H1 (cell line): ENCODE measurements at regions of chr17 and their contacts with region 1.

Region 1: DNA sequence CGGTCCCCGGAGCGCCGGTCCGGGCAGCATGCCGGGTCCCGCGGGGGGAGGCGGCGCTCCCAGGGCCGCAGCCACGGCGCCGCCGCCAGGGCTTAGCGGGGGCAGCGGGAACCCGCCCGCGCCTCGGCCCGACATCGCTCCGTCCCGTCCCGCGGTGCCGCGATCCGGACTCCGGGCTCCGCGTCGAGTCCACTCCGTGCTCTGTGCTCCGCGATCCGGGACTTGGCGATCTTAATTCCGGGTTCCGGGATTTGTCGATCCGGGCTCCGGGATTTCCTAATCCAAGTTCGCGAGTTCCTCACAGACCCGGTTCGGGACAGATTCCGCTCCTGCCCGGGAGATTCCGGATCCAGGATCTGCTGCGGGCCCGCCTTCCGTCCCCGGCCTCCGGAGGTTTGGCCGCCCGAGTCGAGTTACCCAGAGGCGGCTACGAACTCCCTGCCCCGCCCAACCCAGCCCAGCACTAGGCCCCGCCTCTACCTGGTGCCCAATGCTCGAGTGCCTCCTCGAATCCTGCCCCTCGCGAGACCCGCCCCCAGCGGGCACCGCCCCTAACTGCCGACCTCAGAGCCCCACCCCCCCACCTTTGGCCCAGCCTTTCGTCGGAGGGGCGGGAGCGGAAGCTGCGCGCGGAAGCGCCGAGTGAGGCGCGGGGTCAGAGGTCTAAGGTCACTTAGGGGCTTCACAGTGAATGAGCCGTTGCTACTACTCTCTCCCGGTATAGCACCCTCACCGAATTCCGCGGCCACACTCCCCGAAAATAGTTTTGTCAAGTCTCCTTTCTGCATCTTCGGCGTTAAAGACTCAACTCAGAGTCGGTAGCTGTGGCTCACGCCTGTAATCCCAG is at the start of gene SMARCD2:
- DNase-seq: peak; percentile 97
- H3K4me3 ChIP-seq: peak within 1 kb of the TSS; percentile 76 to 97 (median 83)
- H3K27ac ChIP-seq: peak within 1 kb of the TSS; percentile 65; the same call in 1 of the 2 replicates
- H3K4me1 ChIP-seq: peaks cover 3 to 26% (median 24%) of the 10 kb centered on the region in 4 experiments
- H3K27me3 ChIP-seq: peaks cover 0 to 16% (median 10%) of the 10 kb centered on the region in 4 experiments; a peak in 6 of 7 replicates
- CTCF ChIP-seq: no peak
- EP300 ChIP-seq: peak in 1 of 2 experiments; percentile 89; a peak in 2 of 3 replicates
- POLR2A ChIP-seq: peak in 1 of 2 experiments; percentile 43; a peak in 1 of 3 replicates
- RAD21 ChIP-seq: no peak
- total RNA-seq, gene SMARCD2: 84.6 and 92.2 TPM in 2 replicates

Region 2: GRCh38 chr17:63819585-63820537 is 22.9 kb before region 1 on chr17:
- CTCF ChIA-PET with region 1: interaction called, 10 read pairs
- POLR2A ChIA-PET with region 1: interaction called, 593 read pairs
- DNase-seq: peak in 1 of 2 experiments; percentile 35
- H3K4me3 ChIP-seq: no peak overlapping the region
- H3K27ac ChIP-seq: no peak overlapping the region
- H3K4me1 ChIP-seq: no peaks in the 10 kb centered on the region
- H3K27me3 ChIP-seq: no peaks in the 10 kb centered on the region
- CTCF ChIP-seq: no peak
- EP300 ChIP-seq: no peak
- POLR2A ChIP-seq: peak; percentile 10 to 61; a peak in 2 of 3 replicates
- RAD21 ChIP-seq: no peak

Region 3: DNA sequence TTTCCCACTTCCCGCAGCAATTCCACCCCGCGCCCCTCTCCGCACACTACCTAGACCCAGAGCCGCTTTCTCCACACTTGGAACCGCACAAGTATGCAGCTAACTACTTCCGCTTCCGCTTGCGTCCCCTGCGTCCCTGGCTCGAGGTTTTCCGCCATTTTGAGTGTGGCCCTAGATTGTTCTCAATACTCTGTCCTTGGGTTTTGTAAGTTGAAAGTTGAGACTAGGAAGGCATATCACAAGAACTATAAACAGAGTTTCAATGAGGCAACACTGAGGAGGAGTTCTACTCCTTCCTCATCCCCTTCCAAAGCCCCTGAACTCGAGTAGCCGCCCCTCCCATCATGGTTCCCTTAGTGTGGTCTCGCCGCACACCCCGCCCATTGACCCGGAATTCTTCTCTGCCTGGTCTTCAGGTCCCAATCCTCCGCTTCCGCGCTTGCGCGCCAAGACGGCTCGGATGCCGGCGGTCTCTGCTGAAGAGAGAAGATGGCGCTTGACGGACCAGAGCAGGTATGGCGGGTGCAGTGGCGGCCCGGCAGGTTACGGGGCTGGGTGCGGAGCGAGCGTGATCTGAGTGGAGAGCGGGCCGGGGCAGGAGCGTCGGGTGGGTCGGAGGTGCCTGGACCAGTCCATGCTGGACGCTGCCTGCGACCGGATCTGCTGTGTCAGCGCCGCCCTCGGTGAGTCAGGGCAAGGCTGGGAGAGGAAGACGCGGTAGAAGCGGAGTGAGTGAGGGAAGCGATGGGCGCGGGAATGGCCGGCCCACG is 15.6 kb before region 1 on chr17 and contains the starts of genes FTSJ3 and PSMC5:
- CTCF ChIA-PET with region 1: interaction called, 15 read pairs
- POLR2A ChIA-PET with region 1: interaction called, 593 read pairs
- DNase-seq: peak; percentile 75 to 92
- H3K4me3 ChIP-seq: peak within 1 kb of the TSS; percentile 76 to 99 (median 94)
- H3K27ac ChIP-seq: peak within 1 kb of the TSS; percentile 99
- H3K4me1 ChIP-seq: peaks cover 0 to 3% (median 0%) of the 10 kb centered on the region in 4 experiments; a peak in 1 of 7 replicates
- H3K27me3 ChIP-seq: no peaks in the 10 kb centered on the region
- CTCF ChIP-seq: peak; percentile 46 to 70 (median 67)
- EP300 ChIP-seq: 0 out of 3 replicates have a peak, but pooled peaks of 1 of the 2 experiments have one; percentile 1
- POLR2A ChIP-seq: peak; percentile 87 to 89
- RAD21 ChIP-seq: no peak
- total RNA-seq, gene FTSJ3: 77.2 and 77.4 TPM in 2 replicates
- total RNA-seq, gene PSMC5: 162 and 172 TPM in 2 replicates